ENCODE measurements at regions of chr1 and their contacts with region 1.

Region 1: GRCh38 chr1:186212544-186213226 is 162.4 kb downstream of the TPR start:
- DNase-seq: no peak
- H3K4me3 ChIP-seq: no peak overlapping the region
- H3K27ac ChIP-seq: no peak overlapping the region
- H3K4me1 ChIP-seq: peaks cover 0 to 24% (median 18%) of the 10 kb centered on the region in 4 donors
- H3K27me3 ChIP-seq: no peaks in the 10 kb centered on the region
- CTCF ChIP-seq: peak; percentile 80 to 90 (median 89)
- EP300 ChIP-seq: no peak
- POLR2A ChIP-seq: no peak

Region 2: DNA sequence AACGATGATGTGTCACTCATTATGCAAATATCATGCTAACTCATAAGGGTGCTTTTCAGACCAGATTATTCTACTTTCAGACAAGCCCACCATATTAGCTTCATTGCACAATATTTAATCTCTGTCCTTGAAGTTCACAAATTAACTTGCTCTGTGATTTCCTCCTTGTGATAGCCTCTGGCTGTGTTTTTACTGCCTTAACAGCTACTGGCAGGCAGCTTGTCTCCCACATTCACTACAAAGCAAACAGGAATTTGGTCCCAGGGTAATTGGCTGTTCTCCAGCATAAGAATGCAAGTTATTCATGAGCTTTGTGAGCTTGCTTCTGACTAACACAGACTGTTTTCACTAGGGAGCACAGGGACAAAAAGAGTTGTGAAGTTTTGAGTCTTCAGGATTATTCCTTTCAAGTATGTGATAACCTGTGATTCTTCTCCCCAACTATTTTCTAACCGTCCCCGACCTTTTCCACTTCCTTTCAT is 566.4 kb before region 1 on chr1:
- intact Hi-C with region 1: no loop called
- DNase-seq: no peak
- H3K4me3 ChIP-seq: peak overlapping the region in 1 of 4 donors; percentile 23
- H3K27ac ChIP-seq: peak overlapping the region; percentile 0 to 49 (median 32)
- H3K4me1 ChIP-seq: peaks cover 16 to 21% (median 18%) of the 10 kb centered on the region in 4 donors
- H3K27me3 ChIP-seq: no peaks in the 10 kb centered on the region
- CTCF ChIP-seq: no peak
- EP300 ChIP-seq: no peak
- POLR2A ChIP-seq: no peak

Region 3: GRCh38 chr1:185720633-185721272 is 491.9 kb before region 1 on chr1:
- intact Hi-C with region 1: loop called (anchors 5 kb)
- DNase-seq: no peak
- H3K4me3 ChIP-seq: no peak overlapping the region
- H3K27ac ChIP-seq: no peak overlapping the region
- H3K4me1 ChIP-seq: peaks cover 0 to 19% (median 14%) of the 10 kb centered on the region in 4 donors
- H3K27me3 ChIP-seq: no peaks in the 10 kb centered on the region
- CTCF ChIP-seq: peak; percentile 69 to 76 (median 73)
- EP300 ChIP-seq: no peak
- POLR2A ChIP-seq: no peak

Region 4: GRCh38 chr1:185813401-185813979 is 399.2 kb before region 1 on chr1:
- intact Hi-C with region 1: loop called (anchors 10 kb)
- DNase-seq: no peak
- H3K4me3 ChIP-seq: no peak overlapping the region
- H3K27ac ChIP-seq: no peak overlapping the region
- H3K4me1 ChIP-seq: peaks cover 0 to 11% (median 4%) of the 10 kb centered on the region in 4 donors
- H3K27me3 ChIP-seq: no peaks in the 10 kb centered on the region
- CTCF ChIP-seq: peak; percentile 42 to 53 (median 51)
- EP300 ChIP-seq: no peak
- POLR2A ChIP-seq: no peak

Region 5: DNA sequence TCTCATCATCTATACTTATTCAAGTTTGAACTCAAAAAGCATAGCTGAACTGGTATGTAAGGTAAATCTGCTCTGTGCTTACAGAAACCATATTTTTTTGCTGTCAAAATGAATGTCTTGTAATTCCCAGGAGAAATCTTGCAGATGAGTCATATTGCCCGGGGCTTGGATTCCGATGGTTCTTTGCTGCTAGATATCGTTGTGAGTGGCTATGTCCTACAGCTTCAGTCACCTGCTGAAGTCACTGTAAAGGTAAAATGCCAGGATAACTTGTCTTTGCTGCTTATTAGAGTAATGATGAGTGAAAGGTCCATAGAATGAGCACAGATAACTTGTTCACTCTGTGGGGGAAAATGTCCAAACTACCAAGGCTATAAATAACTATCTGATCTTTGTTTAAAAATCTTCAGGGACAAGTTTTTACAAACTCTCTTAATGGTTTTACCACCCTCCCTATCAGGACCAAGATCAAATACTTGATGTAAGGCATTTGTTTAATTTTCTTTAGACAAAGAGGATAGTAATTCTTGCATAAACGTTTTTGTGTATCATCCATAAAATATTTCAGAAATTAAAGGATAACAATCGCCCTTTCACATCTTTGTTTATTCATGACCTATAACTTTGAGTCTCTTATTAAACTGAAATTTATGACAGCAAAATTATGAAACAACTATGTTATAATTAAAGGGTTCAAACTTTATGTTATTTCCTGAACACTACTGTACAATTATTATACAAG is 59.9 kb before region 1 on chr1:
- intact Hi-C with region 1: loop called (anchors 5 kb)
- DNase-seq: no peak
- H3K4me3 ChIP-seq: no peak overlapping the region
- H3K27ac ChIP-seq: peak overlapping the region in 3 of 4 donors; percentile 50 to 57 (median 52)
- H3K4me1 ChIP-seq: peaks cover 0 to 27% (median 22%) of the 10 kb centered on the region in 4 donors
- H3K27me3 ChIP-seq: no peaks in the 10 kb centered on the region
- CTCF ChIP-seq: no peak
- EP300 ChIP-seq: no peak
- POLR2A ChIP-seq: no peak

Region 6: DNA sequence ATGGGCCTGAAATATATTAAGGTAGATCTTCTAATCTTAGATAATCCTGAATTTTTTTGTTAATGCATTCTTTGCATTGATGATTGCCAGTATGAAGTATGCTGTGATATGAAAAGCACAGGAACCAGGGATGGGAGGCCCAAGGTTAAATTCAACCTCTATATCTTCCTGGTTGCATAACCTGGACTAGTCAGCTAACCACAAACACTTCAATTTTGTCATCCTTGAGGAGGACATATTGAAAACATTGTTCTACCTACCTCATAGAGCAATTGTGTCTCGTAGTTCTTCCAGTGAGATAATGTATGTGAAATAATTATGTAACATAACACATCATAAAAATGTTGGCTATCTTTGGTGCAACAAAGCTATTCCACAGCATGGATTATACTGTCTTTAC is 222.7 kb after region 1 on chr1:
- intact Hi-C with region 1: no loop called
- DNase-seq: no peak
- H3K4me3 ChIP-seq: no peak overlapping the region
- H3K27ac ChIP-seq: no peak overlapping the region
- H3K4me1 ChIP-seq: peaks cover 0 to 5% (median 2%) of the 10 kb centered on the region in 4 donors
- H3K27me3 ChIP-seq: no peaks in the 10 kb centered on the region
- CTCF ChIP-seq: no peak
- EP300 ChIP-seq: no peak
- POLR2A ChIP-seq: no peak